Esophagus muscularis mucosa (tissue), 4 donors: ENCODE measurements at regions of chr1 and their contacts with region 1.

Region 1: GRCh38 chr1:22052115-22053016 is at the start of gene CDC42:
- DNase-seq: peak; percentile 98
- H3K4me3 ChIP-seq: peak within 1 kb of the TSS; percentile 77 to 100 (median 96)
- H3K27ac ChIP-seq: peak within 1 kb of the TSS; percentile 99 to 100 (median 100)
- H3K4me1 ChIP-seq: peaks cover 35 to 41% (median 41%) of the 10 kb centered on the region in 4 donors
- H3K27me3 ChIP-seq: no peaks in the 10 kb centered on the region
- CTCF ChIP-seq: peak in 1 of 3 experiments; percentile 11
- EP300 ChIP-seq: no peak
- POLR2A ChIP-seq: peak; percentile 97
- total RNA-seq, gene CDC42: 177 to 243 (median 204) TPM

Region 2: GRCh38 chr1:22025368-22026155 is 26.8 kb before region 1 on chr1:
- intact Hi-C with region 1: loop called (anchors 2 kb)
- DNase-seq: peak; percentile 96
- H3K4me3 ChIP-seq: peak overlapping the region; percentile 70 to 98 (median 84)
- H3K27ac ChIP-seq: peak overlapping the region; percentile 96 to 98 (median 98)
- H3K4me1 ChIP-seq: peaks cover 15 to 25% (median 20%) of the 10 kb centered on the region in 4 donors
- H3K27me3 ChIP-seq: no peaks in the 10 kb centered on the region
- CTCF ChIP-seq: peak in 1 of 3 experiments; percentile 11
- EP300 ChIP-seq: no peak
- POLR2A ChIP-seq: peak; percentile 81

Region 3: GRCh38 chr1:22916471-22916820 is 864.1 kb after region 1 on chr1:
- intact Hi-C with region 1: no loop called
- DNase-seq: no peak
- H3K4me3 ChIP-seq: no peak overlapping the region
- H3K27ac ChIP-seq: no peak overlapping the region
- H3K4me1 ChIP-seq: peaks cover 6 to 24% (median 14%) of the 10 kb centered on the region in 4 donors
- H3K27me3 ChIP-seq: peaks cover 0 to 25% (median 0%) of the 10 kb centered on the region in 4 donors
- CTCF ChIP-seq: no peak
- EP300 ChIP-seq: no peak
- POLR2A ChIP-seq: no peak